ENCODE measurements at regions of chr9 and their contacts with region 1.

Region 1: DNA sequence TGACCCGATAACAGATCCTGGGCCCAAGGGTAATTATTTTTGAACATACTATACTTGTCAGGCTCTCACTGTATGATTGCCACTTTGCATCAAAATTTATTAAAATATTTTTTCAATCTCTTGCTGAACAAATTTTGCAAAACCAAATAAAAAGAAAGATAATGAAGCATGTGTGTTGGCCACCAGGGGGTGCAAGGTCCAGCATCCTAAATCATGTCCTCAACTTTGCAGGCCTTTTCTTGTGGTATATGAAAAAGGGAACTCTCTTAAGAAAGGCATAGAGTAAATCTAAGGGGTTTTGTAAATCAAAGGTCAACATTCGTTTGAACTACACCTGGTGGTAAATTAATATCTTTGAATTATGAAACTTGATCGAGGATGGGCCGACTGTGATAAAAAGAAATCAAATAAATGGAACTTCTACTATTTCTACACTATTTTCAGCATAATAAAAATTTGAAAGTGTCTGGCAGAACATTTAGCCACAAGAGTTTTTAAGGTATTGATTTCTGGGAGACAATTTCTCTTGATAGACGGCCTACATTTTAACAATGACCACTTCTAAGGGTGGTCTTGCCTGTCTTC is 676.5 kb downstream of the DMRTA1 start:
- DNase-seq: peak; percentile 55
- H3K4me3 ChIP-seq: no peak overlapping the region
- H3K27ac ChIP-seq: no peak overlapping the region
- H3K4me1 ChIP-seq: no peaks in the 10 kb centered on the region
- H3K27me3 ChIP-seq: no peaks in the 10 kb centered on the region
- CTCF ChIP-seq: peak; percentile 53 to 61
- POLR2A ChIP-seq: no peak

Region 2: DNA sequence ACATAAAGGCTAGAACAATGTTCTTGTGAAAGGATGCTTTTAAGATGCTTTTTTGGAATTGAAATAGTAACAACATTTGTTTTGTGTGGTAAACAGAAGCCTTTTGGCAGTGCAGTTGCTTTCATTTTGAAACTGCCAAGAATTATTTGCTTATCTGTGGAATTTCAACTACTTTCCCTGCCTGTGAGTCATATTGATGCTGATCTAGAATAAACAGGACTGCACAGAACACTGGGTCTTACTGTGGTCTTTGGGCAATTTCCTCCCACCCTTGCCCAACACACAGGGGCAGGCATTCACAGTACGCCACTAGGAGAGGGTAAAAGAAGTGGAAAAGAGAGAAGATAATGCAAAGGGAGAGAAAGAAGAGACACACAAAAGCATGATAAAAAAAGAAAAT is 219.2 kb after region 1 on chr9:
- CTCF ChIA-PET with region 1: no interaction called
- POLR2A ChIA-PET with region 1: no interaction called
- dilution Hi-C with region 1: no loop called
- intact Hi-C with region 1: loop called (anchors 10 kb)
- DNase-seq: peak; percentile 75
- H3K4me3 ChIP-seq: no peak overlapping the region
- H3K27ac ChIP-seq: peak overlapping the region; percentile 8
- H3K4me1 ChIP-seq: peaks cover 17% of the 10 kb centered on the region
- H3K27me3 ChIP-seq: no peaks in the 10 kb centered on the region
- CTCF ChIP-seq: no peak
- POLR2A ChIP-seq: no peak

Region 3: DNA sequence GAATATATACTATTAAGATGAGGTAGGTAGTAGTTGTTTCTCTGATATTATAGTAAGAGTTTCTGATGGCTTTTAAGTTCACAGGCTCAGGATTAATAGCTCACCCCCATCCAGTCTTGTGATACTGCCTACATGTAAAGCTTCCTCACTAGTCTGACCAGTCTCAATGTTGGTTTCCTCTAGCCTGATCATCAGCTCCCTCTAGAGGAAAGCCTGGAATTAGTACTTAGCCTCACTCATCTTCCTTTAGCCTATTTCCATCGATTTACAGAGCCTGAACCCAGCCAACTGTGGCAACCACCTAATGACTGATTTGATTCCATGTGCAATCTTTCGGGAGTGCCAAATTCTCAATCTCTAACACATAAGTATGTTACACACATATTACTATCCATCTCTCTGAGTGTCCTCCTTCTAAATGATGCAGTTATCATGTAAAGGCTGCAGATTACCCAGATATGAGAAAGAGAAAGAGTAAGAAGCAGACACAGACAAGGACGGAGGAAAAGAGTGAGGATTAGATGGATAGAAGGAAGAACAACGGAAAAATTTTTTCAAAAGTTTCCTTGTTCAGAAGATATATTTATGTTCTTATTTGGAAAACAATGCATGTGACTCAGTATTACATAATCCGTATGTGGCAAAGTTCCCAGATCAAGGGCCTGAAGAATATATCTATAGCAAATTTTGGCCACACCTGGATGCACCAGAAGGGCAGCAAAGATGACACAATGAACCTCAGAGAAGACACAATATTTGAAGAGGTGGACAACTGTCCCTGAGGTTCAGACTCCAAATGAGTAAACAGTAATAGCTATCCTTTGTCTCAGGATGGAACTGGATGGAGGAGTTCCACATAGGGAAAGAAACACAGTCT is 369.2 kb after region 1 on chr9:
- CTCF ChIA-PET with region 1: interaction called, 8 read pairs
- POLR2A ChIA-PET with region 1: no interaction called
- dilution Hi-C with region 1: no loop called
- intact Hi-C with region 1: loop called (anchors 1 kb)
- DNase-seq: peak; percentile 64
- H3K4me3 ChIP-seq: no peak overlapping the region
- H3K27ac ChIP-seq: no peak overlapping the region
- H3K4me1 ChIP-seq: no peaks in the 10 kb centered on the region
- H3K27me3 ChIP-seq: no peaks in the 10 kb centered on the region
- CTCF ChIP-seq: peak; percentile 45 to 55
- POLR2A ChIP-seq: no peak

Region 4: DNA sequence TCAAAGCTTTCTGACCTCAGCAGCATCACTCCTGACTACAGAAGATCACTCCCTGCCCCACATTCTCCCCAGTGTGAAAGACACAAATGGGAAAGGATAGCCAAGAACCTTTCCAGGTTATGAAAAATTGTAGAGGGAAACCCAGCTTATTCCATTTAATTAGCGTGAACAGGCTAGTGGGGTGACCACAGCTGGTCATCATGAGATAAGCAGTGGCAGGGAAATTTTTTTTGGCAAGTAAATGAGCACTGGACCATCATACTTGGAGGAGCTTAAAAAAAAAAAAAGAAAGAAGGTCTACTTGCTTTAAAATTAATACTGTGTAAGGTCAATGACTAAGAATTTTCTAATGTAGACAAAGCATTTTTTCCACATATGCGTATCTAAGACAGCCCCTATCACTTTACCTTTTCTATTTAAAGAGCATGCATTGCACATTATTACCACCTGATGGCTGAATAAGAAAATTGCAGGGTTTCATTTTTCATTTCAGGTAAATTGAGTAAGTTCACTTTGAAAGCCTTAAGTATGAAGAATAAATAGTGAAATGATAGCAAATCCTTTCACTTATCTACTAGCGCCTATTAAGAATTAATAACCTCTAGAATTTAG is 579.3 kb after region 1 on chr9:
- CTCF ChIA-PET with region 1: interaction called, 3 read pairs
- POLR2A ChIA-PET with region 1: no interaction called
- dilution Hi-C with region 1: no loop called
- intact Hi-C with region 1: loop called (anchors 1 kb)
- DNase-seq: no peak
- H3K4me3 ChIP-seq: no peak overlapping the region
- H3K27ac ChIP-seq: no peak overlapping the region
- H3K4me1 ChIP-seq: no peaks in the 10 kb centered on the region
- H3K27me3 ChIP-seq: no peaks in the 10 kb centered on the region
- CTCF ChIP-seq: no peak
- POLR2A ChIP-seq: no peak

Region 5: DNA sequence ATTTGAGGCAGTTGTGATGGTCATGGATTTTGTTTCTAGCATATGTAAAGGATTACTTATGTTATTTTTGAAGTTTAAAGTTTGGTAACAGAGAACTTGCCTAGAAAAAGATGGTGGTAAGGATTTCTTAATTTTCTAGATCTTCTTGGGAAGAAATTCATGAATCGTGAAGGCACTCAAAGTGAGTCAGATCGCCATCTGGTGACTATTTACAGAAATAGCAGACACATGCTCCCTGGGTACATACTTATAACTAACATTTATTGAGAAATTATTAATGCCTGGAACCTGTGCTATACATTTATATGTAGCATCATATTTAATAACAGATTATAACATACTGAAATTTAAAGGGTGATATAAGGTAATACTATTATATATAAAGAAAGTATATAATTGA is 1122.8 kb after region 1 on chr9:
- CTCF ChIA-PET with region 1: no interaction called
- POLR2A ChIA-PET with region 1: no interaction called
- dilution Hi-C with region 1: no loop called
- intact Hi-C with region 1: loop called (anchors 5 kb)
- DNase-seq: no peak
- H3K4me3 ChIP-seq: no peak overlapping the region
- H3K27ac ChIP-seq: no peak overlapping the region
- H3K4me1 ChIP-seq: no peaks in the 10 kb centered on the region
- H3K27me3 ChIP-seq: no peaks in the 10 kb centered on the region
- CTCF ChIP-seq: peak in 1 of 2 donors; percentile 3
- POLR2A ChIP-seq: no peak

Measured in endothelial cell of umbilical vein (primary cell).